ENCODE measurements at regions of chr16 and their contacts with region 1.

Region 1: DNA sequence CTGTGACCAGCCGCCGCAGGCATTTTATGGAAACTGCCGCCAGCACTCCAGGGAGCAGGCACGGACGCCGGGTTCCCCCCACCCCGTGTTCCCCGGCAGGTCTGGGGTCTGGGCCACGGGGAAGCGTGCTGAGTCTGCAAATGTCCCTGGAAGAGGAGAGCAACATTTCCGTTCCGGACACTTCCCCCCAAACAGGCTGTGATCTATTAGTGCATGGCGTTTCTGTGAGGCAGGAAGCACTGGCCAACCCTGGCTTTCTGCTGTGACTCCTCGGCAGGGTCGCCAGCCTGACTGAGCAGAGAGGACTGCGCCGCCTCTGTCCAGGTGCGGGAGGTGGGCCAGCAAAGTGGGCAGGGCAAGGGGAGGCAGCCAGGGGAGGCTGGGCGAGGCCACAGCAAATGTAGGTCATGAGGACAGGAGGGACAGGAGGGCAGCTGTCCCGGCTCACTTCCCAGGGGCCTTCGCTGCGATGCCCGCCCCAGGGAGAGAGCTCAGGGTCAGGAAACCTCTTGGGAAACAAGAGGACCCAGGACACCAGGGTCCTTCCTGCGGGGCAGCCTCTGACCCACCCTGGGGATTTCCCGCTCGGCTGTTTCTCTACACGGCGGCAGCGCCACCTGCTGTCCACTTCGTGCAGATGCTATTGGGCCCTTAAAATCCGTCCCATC is 9.5 kb downstream of the FOXF1 start:
- DNase-seq: no peak
- H3K4me3 ChIP-seq: peak overlapping the region; percentile 37
- CTCF ChIP-seq: peak; percentile 86

Region 2: DNA sequence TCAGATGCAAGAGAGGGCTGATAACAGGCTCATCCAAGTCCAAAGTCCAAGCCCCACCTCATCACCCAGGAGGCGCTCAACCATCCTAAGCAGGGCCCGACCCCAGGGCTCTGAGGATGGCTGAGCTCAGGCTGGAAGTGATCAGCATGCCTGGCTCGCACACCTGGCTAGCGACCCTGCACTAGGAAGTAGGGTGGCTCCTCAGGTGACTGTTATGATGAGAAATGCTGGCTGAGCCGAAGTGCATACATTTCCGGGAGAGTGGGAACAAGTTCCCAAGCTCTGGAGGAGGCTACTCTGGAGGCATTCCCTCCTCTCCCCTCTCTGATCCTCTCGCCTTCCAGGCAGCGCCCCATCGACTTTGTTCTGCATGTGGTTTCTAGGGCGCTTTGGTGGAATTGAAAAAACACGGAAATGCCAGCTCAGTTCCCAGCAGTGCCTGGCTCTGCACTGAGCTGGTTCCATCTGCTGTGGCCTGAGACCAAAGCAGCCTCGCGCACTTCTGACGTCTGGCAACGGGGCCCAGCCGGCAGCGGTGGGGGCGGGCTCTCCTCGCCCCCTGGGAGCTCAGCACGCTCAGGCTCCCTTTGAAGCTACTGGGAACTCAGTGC is 490.5 kb before region 1 on chr16:
- CTCF ChIA-PET with region 1: interaction called, 12 read pairs
- POLR2A ChIA-PET with region 1: no interaction called
- DNase-seq: peak; percentile 7
- H3K4me3 ChIP-seq: no peak overlapping the region
- CTCF ChIP-seq: no peak

Region 3: DNA sequence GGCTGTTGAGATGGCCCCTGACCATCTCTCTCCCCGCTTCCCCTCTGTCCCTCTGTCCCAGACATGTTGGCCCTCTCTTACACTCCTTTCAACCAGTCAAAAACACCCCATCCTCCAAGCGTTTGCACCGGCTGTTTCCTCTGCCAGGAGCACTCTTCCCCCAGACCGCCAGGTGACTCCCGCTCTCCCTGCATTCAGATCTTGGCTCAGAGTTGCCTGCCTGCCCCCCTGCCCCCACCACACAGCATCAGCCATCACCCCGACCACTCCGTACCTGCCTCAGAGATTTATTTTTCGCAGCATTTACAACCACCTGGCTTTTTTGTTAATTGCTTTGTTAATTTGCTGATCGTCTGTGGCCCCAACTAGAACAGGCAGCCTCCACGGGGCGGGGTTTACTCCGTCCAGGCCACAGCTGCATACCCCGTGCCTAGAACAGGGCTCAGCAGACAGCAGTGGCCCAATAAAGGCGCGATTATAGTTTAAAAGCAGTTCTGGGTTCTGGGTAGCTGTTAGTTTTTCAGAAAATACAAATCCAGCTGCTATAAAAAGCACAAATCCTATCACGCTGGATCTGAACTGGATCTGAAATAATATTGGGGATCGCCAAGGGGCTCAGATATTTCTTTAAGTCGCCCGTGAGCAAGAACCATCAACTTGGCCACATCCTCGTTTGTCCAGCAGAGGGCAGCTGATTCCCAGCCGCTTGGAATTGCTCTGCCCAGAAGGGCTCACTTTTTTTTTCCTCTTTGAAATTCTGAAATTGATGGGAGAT is 447.3 kb before region 1 on chr16:
- CTCF ChIA-PET with region 1: interaction called, 685 read pairs
- POLR2A ChIA-PET with region 1: no interaction called
- DNase-seq: peak; percentile 4
- H3K4me3 ChIP-seq: no peak overlapping the region
- CTCF ChIP-seq: peak; percentile 78

Region 4: GRCh38 chr16:86252596-86252995 is 267.2 kb before region 1 on chr16:
- CTCF ChIA-PET with region 1: interaction called, 47 read pairs
- POLR2A ChIA-PET with region 1: no interaction called
- DNase-seq: no peak
- H3K4me3 ChIP-seq: no peak overlapping the region
- CTCF ChIP-seq: peak; percentile 41

Region 5: GRCh38 chr16:86363836-86364618 is 155.8 kb before region 1 on chr16:
- CTCF ChIA-PET with region 1: interaction called, 14 read pairs
- POLR2A ChIA-PET with region 1: no interaction called
- DNase-seq: no peak
- H3K4me3 ChIP-seq: no peak overlapping the region
- CTCF ChIP-seq: no peak

Region 6: GRCh38 chr16:86502856-86503748 is 16.7 kb before region 1 on chr16:
- CTCF ChIA-PET with region 1: interaction called, 10 read pairs
- POLR2A ChIA-PET with region 1: no interaction called
- DNase-seq: no peak
- H3K4me3 ChIP-seq: no peak overlapping the region
- CTCF ChIP-seq: no peak

Region 7: GRCh38 chr16:86590501-86591144 is 70.8 kb after region 1 on chr16:
- CTCF ChIA-PET with region 1: no interaction called
- POLR2A ChIA-PET with region 1: no interaction called
- DNase-seq: peak; percentile 68
- H3K4me3 ChIP-seq: no peak overlapping the region
- CTCF ChIP-seq: no peak

Region 8: DNA sequence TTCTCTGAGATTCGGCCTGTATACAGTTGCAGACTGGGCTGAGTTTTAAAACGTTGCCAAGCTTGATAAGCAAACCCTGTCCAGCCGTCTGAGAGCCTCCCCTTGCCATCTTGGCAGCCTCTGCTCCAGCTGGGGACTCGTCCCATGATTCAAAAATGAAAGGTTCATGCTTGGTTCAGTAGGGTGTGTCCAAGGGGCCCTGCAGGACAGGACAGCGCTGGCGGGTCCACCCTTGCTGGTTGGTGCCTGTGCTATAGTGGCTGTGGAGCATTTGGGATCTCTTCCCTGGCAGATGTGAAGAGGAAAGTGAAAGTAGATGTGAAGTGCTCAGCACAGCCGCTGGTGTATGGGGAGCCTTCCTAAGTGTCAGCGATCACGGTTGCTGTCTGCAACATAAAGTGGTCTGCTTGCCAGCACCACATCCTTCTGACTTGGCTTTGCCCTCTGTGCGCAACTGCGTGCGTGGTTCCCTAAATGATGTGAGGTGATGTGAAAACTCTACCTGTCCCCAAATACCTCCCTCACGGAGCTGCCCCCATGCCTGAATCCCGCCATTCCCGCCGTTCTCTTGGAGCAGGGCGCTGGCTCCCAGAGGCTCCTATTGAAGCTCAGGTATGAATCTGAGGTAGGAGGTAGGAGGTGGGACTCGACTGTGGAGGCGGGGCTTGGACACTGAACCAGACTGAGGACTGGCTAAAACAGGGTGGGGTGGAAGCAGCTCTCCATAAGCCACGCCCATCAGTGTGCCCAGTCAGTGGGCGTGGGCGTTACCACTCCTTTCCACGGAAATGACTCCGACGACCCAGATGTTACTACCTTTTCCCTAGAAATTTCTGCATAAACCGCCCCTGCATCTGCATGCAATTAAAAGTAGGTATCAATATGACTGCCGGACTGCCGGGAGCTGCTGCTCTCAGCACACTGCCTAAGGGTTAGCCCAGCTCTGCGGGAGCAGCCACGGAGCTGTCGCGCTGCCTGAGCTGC is 99.3 kb after region 1 on chr16:
- CTCF ChIA-PET with region 1: no interaction called
- POLR2A ChIA-PET with region 1: no interaction called
- DNase-seq: no peak
- H3K4me3 ChIP-seq: no peak overlapping the region
- CTCF ChIP-seq: no peak

Region 9: GRCh38 chr16:86798247-86799041 is 278.7 kb after region 1 on chr16:
- CTCF ChIA-PET with region 1: no interaction called
- POLR2A ChIA-PET with region 1: no interaction called
- DNase-seq: no peak
- H3K4me3 ChIP-seq: no peak overlapping the region
- CTCF ChIP-seq: no peak

Measured in AG04449 (cell line).